Right lobe of liver (tissue), 6 donors: ENCODE measurements at regions of chr15 and their contacts with region 1.

Region 1: GRCh38 chr15:63093486-63094205 is 28.0 kb upstream of the LACTB start:
- DNase-seq: peak; percentile 76 to 88 (median 85)
- ATAC-seq: peak; percentile 99 to 100 (median 100)
- H3K4me3 ChIP-seq: no peak overlapping the region
- H3K27ac ChIP-seq: no peak overlapping the region
- H3K4me1 ChIP-seq: no peaks in the 10 kb centered on the region
- H3K27me3 ChIP-seq: no peaks in the 10 kb centered on the region
- CTCF ChIP-seq: peak; percentile 87 to 92 (median 89)
- POLR2A ChIP-seq: no peak

Region 2: DNA sequence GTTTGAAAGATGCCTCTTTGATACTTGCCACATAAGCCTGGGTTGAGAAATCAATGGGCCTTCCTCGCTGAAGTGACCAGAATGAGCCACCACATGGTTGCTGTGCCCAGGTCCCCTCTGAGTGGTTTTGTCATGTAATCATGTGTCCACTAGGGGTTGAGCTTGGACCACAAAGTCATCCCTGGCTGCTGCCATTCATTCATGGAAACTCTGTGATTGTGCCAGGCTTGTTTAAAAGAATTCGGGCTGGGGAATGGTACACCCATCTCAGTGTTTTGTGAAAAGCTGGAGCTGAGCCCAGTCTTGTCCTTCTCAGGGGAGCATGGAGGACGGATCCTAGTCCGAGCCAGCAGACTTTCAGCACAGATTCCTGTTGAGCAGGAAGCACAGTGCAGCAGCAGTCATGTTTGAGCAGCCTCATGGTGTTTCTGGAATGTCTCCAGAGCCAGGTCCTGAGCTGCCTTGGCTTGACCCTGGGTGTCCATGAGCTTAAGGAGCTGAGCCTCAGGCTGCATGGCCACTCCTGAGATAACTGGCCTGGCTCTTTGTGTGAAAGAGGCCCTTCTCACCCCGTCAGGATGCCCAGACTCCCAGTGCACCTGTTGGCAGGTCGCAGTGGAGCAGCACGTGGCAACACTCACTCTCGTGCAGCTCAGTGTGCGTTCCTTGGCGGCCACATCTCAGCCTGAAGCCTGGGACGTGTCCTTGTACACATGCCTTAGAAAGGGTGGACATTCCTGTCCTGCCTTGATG is 311.4 kb before region 1 on chr15:
- intact Hi-C with region 1: loop called in 1 of 2 experiments (anchors 10 kb)
- DNase-seq: peak in 2 of 3 donors; percentile 53 to 80
- ATAC-seq: peak; percentile 97 to 99 (median 98)
- H3K4me3 ChIP-seq: no peak overlapping the region
- H3K27ac ChIP-seq: no peak overlapping the region
- H3K4me1 ChIP-seq: peaks cover 0 to 5% (median 2%) of the 10 kb centered on the region in 4 donors
- H3K27me3 ChIP-seq: no peaks in the 10 kb centered on the region
- CTCF ChIP-seq: peak; percentile 69 to 92 (median 80)
- POLR2A ChIP-seq: no peak

Region 3: GRCh38 chr15:62958528-62959363 is 134.9 kb before region 1 on chr15:
- intact Hi-C with region 1: no loop called
- DNase-seq: peak; percentile 60 to 85 (median 70)
- ATAC-seq: peak; percentile 93 to 96 (median 94)
- H3K4me3 ChIP-seq: no peak overlapping the region
- H3K27ac ChIP-seq: peak overlapping the region in 2 of 3 donors; percentile 24 to 63
- H3K4me1 ChIP-seq: peaks cover 0 to 18% (median 8%) of the 10 kb centered on the region in 4 donors
- H3K27me3 ChIP-seq: no peaks in the 10 kb centered on the region
- CTCF ChIP-seq: no peak
- POLR2A ChIP-seq: no peak

Region 4: GRCh38 chr15:63048115-63048775 is 45.4 kb before region 1 on chr15:
- intact Hi-C with region 1: loop called in 1 of 2 experiments (anchors 10 kb)
- DNase-seq: peak; percentile 93 to 95 (median 95)
- ATAC-seq: peak; percentile 73 to 94 (median 87)
- H3K4me3 ChIP-seq: peak overlapping the region; percentile 87 to 94 (median 88)
- H3K27ac ChIP-seq: peak overlapping the region; percentile 94 to 98 (median 97)
- H3K4me1 ChIP-seq: peaks cover 0 to 44% (median 16%) of the 10 kb centered on the region in 4 donors
- H3K27me3 ChIP-seq: no peaks in the 10 kb centered on the region
- CTCF ChIP-seq: peak; percentile 84 to 96 (median 90)
- POLR2A ChIP-seq: peak; percentile 94